Activated T-helper 2 cell treated with anti-CD3 and anti-CD28 coated beads, Interferon-gamma antibody, Interleukin-2, Interleukin-4, amounts not matched to agents 10 μg/mL and 5 μg/mL and 100 μg/mL, durations not matched to agents 14 hours and 24 hours and 36 hours (primary cell): ENCODE measurements at regions of chr7 and their contacts with region 1.

Region 1: DNA sequence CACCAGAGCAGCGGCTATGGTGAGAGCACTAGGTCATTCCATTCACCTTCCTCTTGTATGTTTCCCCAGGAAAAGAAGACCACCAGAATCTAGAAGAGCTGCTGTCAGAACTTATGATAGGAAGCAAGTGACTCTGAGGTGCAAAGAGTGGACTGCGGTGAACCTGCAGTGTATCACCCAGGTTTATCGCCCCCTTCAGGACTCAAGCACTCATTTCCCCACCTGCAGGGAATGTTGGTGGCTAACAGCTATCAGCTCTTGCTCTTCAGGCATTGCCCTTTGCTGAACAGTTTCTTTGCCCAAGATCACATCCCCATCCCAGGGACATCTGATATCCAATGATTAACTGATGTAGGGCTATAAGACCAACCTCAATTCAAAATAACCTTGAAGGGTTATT is 66.3 kb upstream of the IL6 start:
- DNase-seq: no peak
- H3K4me3 Mint-ChIP-seq: no peak overlapping the region
- H3K27ac Mint-ChIP-seq: no peak overlapping the region
- H3K4me1 Mint-ChIP-seq: peaks cover 37% of the 10 kb centered on the region
- H3K27me3 Mint-ChIP-seq: peaks cover 38% of the 10 kb centered on the region

Region 2: GRCh38 chr7:21945454-21946227 is 715.1 kb before region 1 on chr7 and contains the start of gene CDCA7L:
- intact Hi-C with region 1: loop called (anchors 10 kb)
- DNase-seq: peak; percentile 67
- H3K4me3 Mint-ChIP-seq: peak within 1 kb of the TSS; percentile 91
- H3K27ac Mint-ChIP-seq: peak within 1 kb of the TSS; percentile 85
- H3K4me1 Mint-ChIP-seq: peaks cover 62% of the 10 kb centered on the region
- H3K27me3 Mint-ChIP-seq: peaks cover 6% of the 10 kb centered on the region
- total RNA-seq, gene CDCA7L: 81.5 and 82.9 TPM in 2 replicates

Region 3: GRCh38 chr7:22420973-22421635 is 239.6 kb before region 1 on chr7:
- intact Hi-C with region 1: no loop called
- DNase-seq: no peak
- H3K4me3 Mint-ChIP-seq: no peak overlapping the region
- H3K27ac Mint-ChIP-seq: no peak overlapping the region
- H3K4me1 Mint-ChIP-seq: no peaks in the 10 kb centered on the region
- H3K27me3 Mint-ChIP-seq: peaks cover 11% of the 10 kb centered on the region

Region 4: GRCh38 chr7:22445140-22445743 is 215.5 kb before region 1 on chr7:
- intact Hi-C with region 1: loop called (anchors 10 kb)
- DNase-seq: no peak
- H3K4me3 Mint-ChIP-seq: no peak overlapping the region
- H3K27ac Mint-ChIP-seq: no peak overlapping the region
- H3K4me1 Mint-ChIP-seq: peaks cover 21% of the 10 kb centered on the region
- H3K27me3 Mint-ChIP-seq: peaks cover 22% of the 10 kb centered on the region

Region 5: DNA sequence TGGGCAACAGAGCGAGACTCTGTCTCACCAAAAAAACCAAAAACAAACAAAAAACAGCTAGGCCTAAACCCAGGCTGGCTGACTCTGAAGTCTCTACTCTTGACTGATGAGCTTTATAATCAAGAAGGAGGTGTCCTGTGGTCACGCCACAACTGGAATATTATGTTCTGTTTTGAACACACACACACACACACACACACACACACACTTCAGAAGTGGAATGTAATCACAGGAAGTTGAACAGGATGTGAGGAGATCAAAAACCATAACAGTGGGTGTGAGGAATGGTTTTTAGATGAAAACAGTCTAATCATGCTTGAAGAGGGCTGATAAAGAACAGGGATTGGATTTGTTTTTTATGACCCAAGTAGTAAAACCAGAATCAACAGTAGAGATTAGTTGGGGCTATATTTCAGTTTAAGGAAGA is 15.2 kb after region 1 on chr7:
- intact Hi-C with region 1: loop called (anchors 2 kb)
- DNase-seq: peak; percentile 63
- H3K4me3 Mint-ChIP-seq: no peak overlapping the region
- H3K27ac Mint-ChIP-seq: peak overlapping the region; percentile 54
- H3K4me1 Mint-ChIP-seq: peaks cover 84% of the 10 kb centered on the region
- H3K27me3 Mint-ChIP-seq: peaks cover 2% of the 10 kb centered on the region

Region 6: DNA sequence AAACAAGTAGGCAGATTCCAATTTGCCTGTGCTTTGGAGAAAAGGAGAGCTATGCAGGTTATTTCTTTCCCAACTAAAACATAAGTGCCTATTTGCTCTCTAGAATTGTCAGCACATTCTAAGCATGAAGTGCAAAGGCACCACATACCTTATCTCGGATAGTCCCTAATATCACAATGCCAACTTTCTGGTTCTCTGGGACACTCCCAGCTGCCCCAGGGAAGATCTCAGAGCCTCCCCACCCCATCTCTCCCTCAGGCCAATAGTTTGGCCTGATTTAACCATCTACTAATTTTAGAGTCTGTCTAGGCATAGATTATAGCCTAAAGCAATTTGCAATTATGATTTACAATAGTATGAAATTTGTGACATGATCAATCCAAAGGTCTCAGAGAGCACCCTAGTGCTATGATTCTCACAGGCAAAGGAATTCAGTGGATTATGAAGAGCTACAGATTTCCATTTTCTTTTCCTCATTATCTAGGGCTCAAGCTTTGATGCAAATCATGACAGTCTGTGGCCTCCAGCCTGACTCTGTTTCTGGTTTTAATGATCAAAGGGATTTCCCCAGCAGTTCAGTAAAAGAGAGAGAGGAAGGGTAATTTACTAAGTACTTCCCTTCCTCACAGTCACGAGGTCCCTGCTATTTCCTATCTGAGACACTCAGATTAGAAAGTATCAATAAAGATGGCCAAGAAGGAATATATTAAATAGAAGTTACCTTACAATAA is 37.3 kb after region 1 on chr7:
- intact Hi-C with region 1: loop called (anchors 1 kb)
- DNase-seq: no peak
- H3K4me3 Mint-ChIP-seq: no peak overlapping the region
- H3K27ac Mint-ChIP-seq: peak overlapping the region; percentile 56
- H3K4me1 Mint-ChIP-seq: peaks cover 78% of the 10 kb centered on the region
- H3K27me3 Mint-ChIP-seq: peaks cover 7% of the 10 kb centered on the region

Region 7: DNA sequence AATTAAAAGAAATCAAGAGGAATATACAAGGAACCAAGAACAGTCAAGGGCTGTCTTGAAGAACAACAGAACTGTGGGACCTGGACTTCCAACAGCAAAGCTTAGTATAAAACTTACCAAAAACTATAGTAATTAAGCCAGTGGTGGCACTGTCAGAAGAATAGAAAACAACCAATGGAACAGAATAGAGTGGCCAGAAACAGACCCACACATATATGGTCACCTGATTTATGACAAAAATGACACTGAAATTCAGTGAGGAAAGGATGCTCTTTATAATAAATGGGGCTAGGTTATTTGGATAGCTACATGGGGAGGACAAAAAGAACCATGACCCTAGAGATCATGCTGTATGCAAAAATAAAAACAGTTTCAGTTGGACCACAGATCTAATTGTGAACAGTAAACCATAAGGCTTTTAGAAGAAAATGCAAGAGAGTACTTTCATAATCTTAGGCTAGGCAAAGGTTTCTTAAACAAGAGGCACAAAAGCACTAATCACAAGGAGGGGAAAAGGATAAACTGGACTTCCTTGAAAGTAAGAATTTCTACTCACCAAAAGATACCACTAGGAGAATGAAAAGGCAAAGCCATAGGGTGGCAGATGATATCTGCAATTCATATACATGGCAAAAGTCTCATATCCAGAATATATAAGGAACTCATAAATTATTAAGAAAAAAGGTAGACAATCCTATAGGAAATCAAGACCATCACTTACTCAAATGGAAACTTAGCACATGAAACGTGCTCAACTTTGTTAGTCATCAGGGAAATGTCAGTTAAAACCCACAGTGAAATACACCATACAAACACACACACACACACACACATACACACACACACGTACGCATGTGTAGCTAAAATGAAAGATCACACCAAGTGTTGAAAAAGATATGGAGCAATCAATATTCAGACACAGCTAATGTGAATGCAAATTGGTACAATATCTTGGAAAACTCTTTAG is 332.4 kb after region 1 on chr7:
- intact Hi-C with region 1: loop called (anchors 5 kb)
- DNase-seq: no peak
- H3K4me3 Mint-ChIP-seq: peak overlapping the region; percentile 9
- H3K27ac Mint-ChIP-seq: peak overlapping the region; percentile 84
- H3K4me1 Mint-ChIP-seq: peaks cover 63% of the 10 kb centered on the region
- H3K27me3 Mint-ChIP-seq: no peaks in the 10 kb centered on the region